Breast epithelium (tissue), 4 donors: ENCODE measurements at regions of chr6 and their contacts with region 1.

Region 1: DNA sequence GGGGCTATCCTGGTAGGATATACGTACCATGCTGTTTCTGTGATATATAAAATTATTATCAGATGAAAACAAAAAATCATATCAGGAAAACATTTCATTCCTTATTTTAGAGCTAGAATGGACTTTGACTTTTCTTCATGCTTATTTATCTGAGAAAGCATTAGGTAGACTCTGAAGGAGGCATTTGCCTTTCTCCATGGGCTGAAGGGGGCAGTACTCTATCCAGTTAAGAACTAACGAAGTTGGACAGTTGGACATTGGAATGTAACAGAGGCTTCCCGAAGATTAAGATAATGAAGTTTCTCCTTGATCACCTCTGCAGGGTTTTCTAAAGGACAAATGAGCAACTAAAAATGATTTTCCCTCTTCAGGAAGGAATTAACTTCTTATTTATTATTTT is 233.9 kb downstream of the SAMD5 start:
- DNase-seq: no peak
- H3K4me3 ChIP-seq: no peak overlapping the region
- H3K27ac ChIP-seq: no peak overlapping the region
- H3K4me1 ChIP-seq: no peaks in the 10 kb centered on the region
- H3K27me3 ChIP-seq: no peaks in the 10 kb centered on the region
- CTCF ChIP-seq: no peak
- POLR2A ChIP-seq: no peak

Region 2: GRCh38 chr6:147699637-147700036 is 42.8 kb before region 1 on chr6:
- intact Hi-C with region 1: loop called (anchors 2 kb)
- DNase-seq: no peak
- H3K4me3 ChIP-seq: no peak overlapping the region
- H3K27ac ChIP-seq: no peak overlapping the region
- H3K4me1 ChIP-seq: no peaks in the 10 kb centered on the region
- H3K27me3 ChIP-seq: no peaks in the 10 kb centered on the region
- CTCF ChIP-seq: no peak
- POLR2A ChIP-seq: no peak